Kidney (tissue), 22 donors: ENCODE measurements at regions of chr9 and their contacts with region 1.

Region 1: DNA sequence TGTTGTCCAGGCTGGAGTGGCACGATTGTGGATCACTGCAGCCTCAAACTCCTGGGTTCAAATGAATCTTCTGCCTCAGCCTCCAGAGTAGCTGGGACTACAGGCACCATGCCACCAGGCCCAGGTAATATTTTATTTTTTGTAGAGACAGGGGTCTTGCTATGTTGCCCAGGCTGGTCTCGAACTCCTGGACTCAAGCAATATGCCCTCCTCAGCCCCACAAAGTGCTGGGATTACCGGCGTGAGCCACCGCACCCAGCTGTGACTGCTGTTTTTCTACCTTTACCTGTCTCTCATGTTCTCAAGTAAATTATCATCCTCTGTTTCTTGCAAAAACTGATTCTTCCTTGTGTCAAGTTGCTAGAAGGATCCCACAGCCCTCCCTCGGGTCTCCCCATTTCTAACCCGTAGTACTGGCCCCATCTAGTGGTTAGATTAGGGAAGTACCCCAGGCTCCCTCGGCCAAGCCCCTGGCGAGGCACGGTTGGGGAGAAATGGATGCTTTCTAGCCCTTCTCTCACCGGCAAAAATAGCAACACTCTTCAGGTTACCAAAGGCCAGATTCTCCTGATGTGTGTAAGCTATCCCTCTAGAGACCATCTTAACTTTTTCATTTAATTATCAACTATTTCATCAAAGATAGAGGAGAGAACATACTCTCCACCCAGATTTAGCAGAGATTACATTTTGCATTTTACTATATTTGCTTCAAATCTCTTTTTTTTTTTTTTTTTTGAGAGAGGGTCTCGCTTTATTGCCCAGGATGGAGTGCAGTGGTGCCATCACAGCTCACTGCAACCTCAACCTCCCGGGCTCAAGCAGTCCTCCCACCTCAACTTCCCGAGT is 19.2 kb upstream of the TOR1B start:
- DNase-seq: peak in 4 of 5 donors; percentile 75 to 88 (median 80)
- H3K4me3 ChIP-seq: no peak overlapping the region
- H3K27ac ChIP-seq: no peak overlapping the region
- H3K4me1 ChIP-seq: no peaks in the 10 kb centered on the region
- H3K27me3 ChIP-seq: no peaks in the 10 kb centered on the region
- CTCF ChIP-seq: peak; percentile 86

Region 2: GRCh38 chr9:129125476-129125875 is 658.3 kb before region 1 on chr9:
- intact Hi-C with region 1: loop called (anchors 10 kb)
- DNase-seq: no peak
- H3K4me3 ChIP-seq: no peak overlapping the region
- H3K27ac ChIP-seq: no peak overlapping the region
- H3K4me1 ChIP-seq: peaks cover 0 to 4% (median 0%) of the 10 kb centered on the region in 3 donors
- H3K27me3 ChIP-seq: no peaks in the 10 kb centered on the region
- CTCF ChIP-seq: no peak

Region 3: DNA sequence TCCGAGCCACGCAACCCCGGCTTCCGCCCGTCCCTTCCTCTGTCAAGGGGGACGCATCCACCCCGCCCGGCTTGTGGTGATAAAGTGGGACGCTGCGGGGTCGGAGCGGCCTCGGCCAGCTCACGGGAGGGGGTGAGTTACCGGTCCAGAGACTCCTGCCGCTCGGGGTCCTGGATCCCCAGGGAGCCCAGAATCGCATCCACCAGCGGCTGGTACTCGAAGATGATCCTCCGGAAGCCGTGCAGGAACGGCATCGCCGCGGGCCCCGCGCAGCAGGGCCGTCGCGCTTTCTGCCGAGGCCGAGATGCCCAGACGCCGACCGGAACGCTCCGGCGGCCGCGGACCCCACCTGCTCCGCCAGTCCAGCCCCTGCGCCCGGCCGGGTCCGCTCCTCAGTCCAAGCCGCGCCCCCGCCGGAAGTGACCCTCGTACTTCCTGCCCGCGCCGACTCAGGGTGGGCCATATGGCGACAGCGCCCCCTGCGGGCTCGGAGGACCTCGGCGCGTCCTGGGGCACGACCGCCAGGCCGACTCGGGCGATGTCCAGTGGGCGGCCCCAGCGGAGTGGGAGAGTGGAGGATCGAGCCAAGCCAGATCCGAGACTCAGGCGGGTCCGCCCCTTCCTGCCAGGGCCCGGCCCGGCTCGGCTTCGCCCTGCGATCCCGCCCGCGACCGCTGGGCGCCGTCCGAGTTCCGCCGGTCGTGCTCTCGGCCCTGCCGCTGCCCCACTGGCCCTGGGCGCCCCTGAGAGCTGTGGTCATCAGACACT is 141.8 kb before region 1 on chr9 and contains the start of gene ASB6:
- intact Hi-C with region 1: loop called (anchors 10 kb)
- DNase-seq: peak; percentile 98 to 99 (median 99)
- H3K4me3 ChIP-seq: peak within 1 kb of the TSS; percentile 73 to 90 (median 77)
- H3K27ac ChIP-seq: peak within 1 kb of the TSS; percentile 89 to 90
- H3K4me1 ChIP-seq: peaks cover 0 to 28% (median 8%) of the 10 kb centered on the region in 3 donors
- H3K27me3 ChIP-seq: no peaks in the 10 kb centered on the region
- CTCF ChIP-seq: peak; percentile 85
- total RNA-seq, gene ASB6: 22.5 TPM

Region 4: GRCh38 chr9:129737479-129738274 is 46.1 kb before region 1 on chr9:
- intact Hi-C with region 1: loop called (anchors 5 kb)
- DNase-seq: peak; percentile 88 to 94 (median 92)
- H3K4me3 ChIP-seq: peak overlapping the region in 2 of 3 donors; percentile 33 to 53
- H3K27ac ChIP-seq: peak overlapping the region in 1 of 2 donors; percentile 14
- H3K4me1 ChIP-seq: peaks cover 0 to 3% (median 0%) of the 10 kb centered on the region in 3 donors
- H3K27me3 ChIP-seq: no peaks in the 10 kb centered on the region
- CTCF ChIP-seq: peak; percentile 92